Prostate gland (tissue), 2 donors: ENCODE measurements at regions of chr3 and their contacts with region 1.

Region 1: GRCh38 chr3:123986427-123986826 is 5.5 kb downstream of the ROPN1 start:
- DNase-seq: no peak
- H3K4me3 ChIP-seq: no peak overlapping the region
- H3K27ac ChIP-seq: no peak overlapping the region
- H3K4me1 ChIP-seq: no peaks in the 10 kb centered on the region
- H3K27me3 ChIP-seq: peaks cover 2% of the 10 kb centered on the region
- CTCF ChIP-seq: no peak
- POLR2A ChIP-seq: no peak

Region 2: GRCh38 chr3:123723522-123724168 is 262.8 kb before region 1 on chr3:
- intact Hi-C with region 1: loop called (anchors 10 kb)
- DNase-seq: peak; percentile 55
- H3K4me3 ChIP-seq: no peak overlapping the region
- H3K27ac ChIP-seq: peak overlapping the region in 1 of 2 donors; percentile 7
- H3K4me1 ChIP-seq: no peaks in the 10 kb centered on the region
- H3K27me3 ChIP-seq: no peaks in the 10 kb centered on the region
- CTCF ChIP-seq: peak; percentile 45 to 82 (median 74)
- POLR2A ChIP-seq: no peak